Panc1 (cell line): ENCODE measurements at regions of chr7 and their contacts with region 1.

Region 1: DNA sequence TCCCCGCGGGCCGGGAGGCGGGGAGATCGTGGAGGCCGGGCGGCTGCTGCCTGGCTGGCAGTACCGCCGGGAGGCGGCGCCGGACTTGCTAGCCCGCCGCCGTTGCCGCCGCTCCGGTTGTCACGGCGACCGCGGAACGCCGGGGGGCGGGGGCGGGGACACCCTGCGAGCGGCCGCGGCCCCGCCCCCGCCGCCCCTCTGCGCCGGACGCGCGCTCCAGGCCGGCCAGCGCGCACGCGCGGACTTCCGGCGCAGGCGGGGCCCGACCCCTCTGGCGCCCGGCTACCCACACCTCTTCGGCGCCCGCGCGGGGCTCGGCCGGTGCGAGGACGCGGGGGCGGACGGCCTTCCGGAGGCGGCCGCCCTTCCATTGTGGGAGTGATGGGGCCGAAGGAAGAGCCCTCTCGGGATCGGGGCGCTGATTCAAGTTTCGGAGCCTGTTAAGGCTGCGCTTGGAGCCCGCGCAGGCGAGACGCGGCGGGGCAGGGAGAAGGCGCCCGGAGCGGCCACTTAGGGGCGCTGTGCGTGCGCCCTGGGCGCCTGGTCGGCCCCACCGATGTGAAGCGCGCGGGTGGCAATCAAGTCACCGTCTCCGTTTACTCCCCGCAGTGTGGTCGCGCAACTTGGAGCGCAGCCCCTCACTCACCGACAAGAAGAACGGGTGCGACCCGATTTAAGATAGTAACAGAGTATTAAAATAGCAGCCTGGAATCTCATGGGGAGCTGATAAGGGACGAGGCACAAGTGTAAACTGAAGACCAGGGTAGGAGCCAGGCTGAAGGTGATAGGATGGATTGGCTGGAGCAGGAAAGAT is 448 bp upstream of the DPY19L1 start:
- DNase-seq: no peak
- ATAC-seq: peak; percentile 94
- H3K4me3 ChIP-seq: peak overlapping the region; percentile 71 to 90
- H3K27ac ChIP-seq: peak overlapping the region; percentile 89
- H3K4me1 ChIP-seq: peaks cover 23% of the 10 kb centered on the region
- H3K27me3 ChIP-seq: no peaks in the 10 kb centered on the region
- CTCF ChIP-seq: peak; percentile 99

Region 2: GRCh38 chr7:34675749-34676374 is 361.9 kb before region 1 on chr7:
- CTCF ChIA-PET with region 1: no interaction called
- POLR2A ChIA-PET with region 1: interaction called, 20 read pairs
- in situ Hi-C with region 1: no loop called
- intact Hi-C with region 1: no loop called
- DNase-seq: peak; percentile 13
- ATAC-seq: peak; percentile 85
- H3K4me3 ChIP-seq: no peak overlapping the region
- H3K27ac ChIP-seq: no peak overlapping the region
- H3K4me1 ChIP-seq: no peaks in the 10 kb centered on the region
- H3K27me3 ChIP-seq: no peaks in the 10 kb centered on the region
- CTCF ChIP-seq: peak; percentile 85

Region 3: DNA sequence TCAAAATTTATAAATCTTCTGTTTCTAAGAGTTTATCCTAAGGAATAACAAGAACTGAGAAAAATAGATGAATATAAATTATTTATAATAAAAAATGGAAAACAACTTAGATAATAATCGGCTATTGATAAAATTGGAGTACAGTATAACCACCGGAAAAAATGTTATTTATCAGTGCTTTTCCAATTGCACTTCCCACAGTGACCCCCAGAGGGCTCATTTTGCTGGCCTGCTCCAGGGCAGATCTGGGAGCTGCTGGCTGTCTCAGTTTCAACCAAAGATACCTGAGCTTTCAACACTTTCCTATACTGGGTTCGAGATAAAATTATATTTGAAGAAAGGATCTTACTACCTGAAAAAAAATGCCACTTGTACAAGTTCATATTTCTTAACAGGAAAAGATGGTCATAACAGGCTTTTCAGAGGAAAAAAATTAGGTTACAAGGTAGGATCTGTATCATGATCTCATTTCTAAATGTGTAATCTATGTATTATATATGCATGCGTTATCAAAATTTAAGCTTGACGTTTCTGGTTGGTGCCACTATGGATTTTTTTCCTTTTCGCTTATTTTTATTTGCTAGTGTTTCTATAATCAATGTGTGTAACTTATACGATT is 214.0 kb before region 1 on chr7:
- CTCF ChIA-PET with region 1: no interaction called
- POLR2A ChIA-PET with region 1: no interaction called
- in situ Hi-C with region 1: no loop called
- intact Hi-C with region 1: loop called (anchors 2 kb)
- DNase-seq: peak; percentile 36
- ATAC-seq: peak; percentile 79; the same call in 1 of the 2 replicates
- H3K4me3 ChIP-seq: no peak overlapping the region
- H3K27ac ChIP-seq: no peak overlapping the region
- H3K4me1 ChIP-seq: no peaks in the 10 kb centered on the region
- H3K27me3 ChIP-seq: no peaks in the 10 kb centered on the region
- CTCF ChIP-seq: peak; percentile 97

Region 4: DNA sequence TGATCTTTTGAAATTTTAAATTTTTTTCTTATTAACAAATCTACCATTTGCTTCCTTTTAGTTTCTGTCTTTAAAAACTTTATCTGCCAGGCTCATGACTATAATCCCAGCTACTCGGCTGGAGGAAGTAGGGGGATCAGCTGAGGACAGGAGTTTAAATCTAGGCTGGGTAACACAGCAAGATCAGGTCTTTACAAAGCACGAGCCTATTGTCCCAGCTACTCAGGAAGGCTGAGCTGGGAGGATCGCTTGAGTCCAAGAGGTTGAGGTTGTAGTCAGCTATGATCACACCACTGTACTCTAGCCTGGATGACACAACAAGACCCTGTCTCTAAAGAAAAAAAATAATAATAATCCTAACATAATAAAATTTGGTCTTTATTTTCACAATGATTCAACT is 17.9 kb before region 1 on chr7:
- CTCF ChIA-PET with region 1: interaction called, 13 read pairs
- POLR2A ChIA-PET with region 1: interaction called, 3 read pairs
- in situ Hi-C with region 1: no loop called
- intact Hi-C with region 1: no loop called
- DNase-seq: no peak
- ATAC-seq: peak; percentile 67
- H3K4me3 ChIP-seq: no peak overlapping the region
- H3K27ac ChIP-seq: peak overlapping the region; percentile 45
- H3K4me1 ChIP-seq: peaks cover 32% of the 10 kb centered on the region
- H3K27me3 ChIP-seq: no peaks in the 10 kb centered on the region
- CTCF ChIP-seq: no peak